ENCODE measurements at regions of chr18 and their contacts with region 1.

Region 1: GRCh38 chr18:35949903-35950627 is 22.4 kb upstream of the RMP24 start:
- DNase-seq: peak; percentile 61
- H3K4me3 ChIP-seq: peak overlapping the region; percentile 60 to 87 (median 66)
- H3K27ac ChIP-seq: no peak overlapping the region
- H3K4me1 ChIP-seq: peaks cover 8% of the 10 kb centered on the region
- H3K27me3 ChIP-seq: no peaks in the 10 kb centered on the region
- CTCF ChIP-seq: peak; percentile 74 to 91

Region 2: GRCh38 chr18:35386600-35387351 is 563.3 kb before region 1 on chr18:
- CTCF ChIA-PET with region 1: no interaction called
- dilution Hi-C with region 1: no loop called
- in situ Hi-C with region 1: no loop called
- intact Hi-C with region 1: loop called (anchors 1 kb)
- DNase-seq: peak; percentile 61
- H3K4me3 ChIP-seq: no peak overlapping the region
- H3K27ac ChIP-seq: no peak overlapping the region
- H3K4me1 ChIP-seq: no peaks in the 10 kb centered on the region
- H3K27me3 ChIP-seq: no peaks in the 10 kb centered on the region
- CTCF ChIP-seq: peak; percentile 92 to 96

Region 3: DNA sequence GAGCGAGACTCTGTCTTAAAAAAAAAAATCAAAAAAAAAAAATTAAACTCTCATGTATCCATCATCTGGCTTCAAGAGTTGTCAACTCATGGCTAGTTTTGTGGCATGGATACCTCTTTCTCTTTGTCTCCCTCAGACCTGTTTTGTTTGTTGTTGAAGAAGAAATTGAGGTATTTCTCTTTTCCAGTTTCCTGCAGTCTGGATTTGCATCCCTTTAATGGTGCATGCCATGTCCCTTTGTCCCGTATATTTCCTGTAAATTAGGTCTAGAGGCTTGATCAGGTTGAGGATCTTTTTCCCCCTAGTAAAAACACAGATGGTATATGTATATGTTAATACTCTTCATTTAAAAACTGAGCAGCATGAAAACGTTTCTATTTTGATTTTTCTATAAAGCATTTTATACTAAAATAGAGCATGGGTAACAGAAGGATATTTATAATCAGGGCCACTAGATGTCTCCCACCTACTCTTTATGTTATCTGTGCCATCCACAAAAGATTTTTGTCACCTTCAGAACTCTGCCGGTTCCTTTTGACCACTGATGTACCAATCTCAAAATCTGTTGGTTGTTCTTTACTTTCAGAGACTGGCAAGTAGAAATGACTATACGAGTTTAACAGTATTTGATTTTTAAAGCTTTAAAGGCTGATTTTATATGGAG is 288.4 kb before region 1 on chr18:
- CTCF ChIA-PET with region 1: no interaction called
- dilution Hi-C with region 1: no loop called
- in situ Hi-C with region 1: no loop called
- intact Hi-C with region 1: no loop called
- DNase-seq: no peak
- H3K4me3 ChIP-seq: no peak overlapping the region
- H3K27ac ChIP-seq: no peak overlapping the region
- H3K4me1 ChIP-seq: no peaks in the 10 kb centered on the region
- H3K27me3 ChIP-seq: no peaks in the 10 kb centered on the region
- CTCF ChIP-seq: peak; percentile 4 to 22

Region 4: GRCh38 chr18:35917044-35917443 is 33.0 kb before region 1 on chr18:
- CTCF ChIA-PET with region 1: no interaction called
- dilution Hi-C with region 1: no loop called
- in situ Hi-C with region 1: no loop called
- intact Hi-C with region 1: loop called (anchors 1 kb)
- DNase-seq: peak; percentile 12
- H3K4me3 ChIP-seq: no peak overlapping the region
- H3K27ac ChIP-seq: no peak overlapping the region
- H3K4me1 ChIP-seq: peaks cover 10% of the 10 kb centered on the region
- H3K27me3 ChIP-seq: no peaks in the 10 kb centered on the region
- CTCF ChIP-seq: peak; percentile 54 to 88

Region 5: DNA sequence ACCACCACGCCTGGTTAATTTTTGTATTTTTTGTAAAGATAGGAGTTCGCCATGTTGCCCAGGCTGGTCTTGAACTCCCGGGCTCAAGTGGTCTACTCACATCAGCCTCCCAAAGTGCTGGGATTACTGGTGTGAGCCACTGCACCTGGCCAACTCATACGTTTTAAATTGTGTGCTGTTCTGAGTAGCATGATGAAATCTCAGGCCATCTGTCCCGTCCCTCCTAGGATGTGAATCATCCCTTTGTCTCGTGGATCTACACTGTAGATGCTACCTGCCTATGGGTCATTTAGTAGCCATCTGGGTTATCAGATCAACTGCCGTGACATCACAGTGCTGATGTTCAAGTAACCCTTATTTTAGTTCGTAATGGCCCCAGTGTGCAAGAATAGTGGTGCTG is 16.1 kb before region 1 on chr18:
- CTCF ChIA-PET with region 1: no interaction called
- dilution Hi-C with region 1: no loop called
- in situ Hi-C with region 1: no loop called
- intact Hi-C with region 1: loop called (anchors 2 kb)
- DNase-seq: peak; percentile 91
- H3K4me3 ChIP-seq: no peak overlapping the region
- H3K27ac ChIP-seq: peak overlapping the region; percentile 5
- H3K4me1 ChIP-seq: peaks cover 23% of the 10 kb centered on the region
- H3K27me3 ChIP-seq: no peaks in the 10 kb centered on the region
- CTCF ChIP-seq: no peak

Region 6: DNA sequence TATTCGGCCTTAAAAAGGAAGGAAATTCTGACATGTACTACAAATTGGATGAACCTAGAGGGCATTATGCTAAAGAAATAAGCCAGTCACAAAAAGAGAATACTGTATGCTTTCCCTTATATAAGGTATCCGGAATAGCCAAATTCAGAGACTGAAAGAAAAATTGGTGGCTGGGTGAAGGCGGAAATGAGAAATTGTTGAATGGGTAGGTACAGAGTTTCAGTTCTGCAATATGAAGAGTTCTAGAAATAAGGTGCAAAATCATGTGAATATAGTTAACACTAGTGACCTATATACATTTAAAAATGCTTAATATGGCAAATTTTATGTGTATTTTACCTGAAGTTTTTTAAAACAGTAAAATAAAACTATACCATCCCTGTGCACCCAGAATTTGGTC is 65.6 kb after region 1 on chr18:
- CTCF ChIA-PET with region 1: no interaction called
- dilution Hi-C with region 1: no loop called
- in situ Hi-C with region 1: no loop called
- intact Hi-C with region 1: no loop called
- DNase-seq: no peak
- H3K4me3 ChIP-seq: no peak overlapping the region
- H3K27ac ChIP-seq: no peak overlapping the region
- H3K4me1 ChIP-seq: no peaks in the 10 kb centered on the region
- H3K27me3 ChIP-seq: no peaks in the 10 kb centered on the region
- CTCF ChIP-seq: no peak

Region 7: DNA sequence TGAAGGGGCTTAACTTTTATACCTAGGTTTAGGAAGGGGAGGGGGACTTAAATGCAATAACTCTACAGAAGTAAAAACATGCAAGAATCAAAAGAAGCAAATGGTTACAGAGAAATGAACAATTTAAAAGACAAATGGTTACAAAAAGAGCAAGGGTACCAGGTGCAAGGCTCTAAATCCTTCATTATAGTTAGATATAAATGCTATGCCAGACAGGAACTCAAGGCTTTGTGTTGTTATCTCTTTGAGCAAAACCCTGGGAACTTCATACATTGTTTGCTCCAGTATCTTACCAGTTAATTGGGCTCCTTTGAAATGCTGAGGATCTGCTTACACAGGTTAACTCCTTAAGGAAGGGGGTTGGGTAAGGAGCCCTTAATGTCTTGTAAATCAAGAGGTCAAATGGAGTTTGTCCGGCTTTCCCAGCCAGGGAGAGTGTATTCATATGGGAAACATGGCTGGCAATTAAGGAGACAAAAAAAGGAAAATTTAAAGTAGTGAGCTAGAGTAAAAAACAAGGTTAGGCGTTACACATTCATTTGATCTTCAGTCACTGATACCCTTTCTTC is 1268.0 kb after region 1 on chr18:
- CTCF ChIA-PET with region 1: no interaction called
- dilution Hi-C with region 1: no loop called
- in situ Hi-C with region 1: no loop called
- intact Hi-C with region 1: no loop called
- DNase-seq: no peak
- H3K4me3 ChIP-seq: no peak overlapping the region
- H3K27ac ChIP-seq: no peak overlapping the region
- H3K4me1 ChIP-seq: no peaks in the 10 kb centered on the region
- H3K27me3 ChIP-seq: no peaks in the 10 kb centered on the region
- CTCF ChIP-seq: no peak

Measured in mammary epithelial cell (primary cell).